ENCODE measurements at regions of chr1 and their contacts with region 1.

Region 1: DNA sequence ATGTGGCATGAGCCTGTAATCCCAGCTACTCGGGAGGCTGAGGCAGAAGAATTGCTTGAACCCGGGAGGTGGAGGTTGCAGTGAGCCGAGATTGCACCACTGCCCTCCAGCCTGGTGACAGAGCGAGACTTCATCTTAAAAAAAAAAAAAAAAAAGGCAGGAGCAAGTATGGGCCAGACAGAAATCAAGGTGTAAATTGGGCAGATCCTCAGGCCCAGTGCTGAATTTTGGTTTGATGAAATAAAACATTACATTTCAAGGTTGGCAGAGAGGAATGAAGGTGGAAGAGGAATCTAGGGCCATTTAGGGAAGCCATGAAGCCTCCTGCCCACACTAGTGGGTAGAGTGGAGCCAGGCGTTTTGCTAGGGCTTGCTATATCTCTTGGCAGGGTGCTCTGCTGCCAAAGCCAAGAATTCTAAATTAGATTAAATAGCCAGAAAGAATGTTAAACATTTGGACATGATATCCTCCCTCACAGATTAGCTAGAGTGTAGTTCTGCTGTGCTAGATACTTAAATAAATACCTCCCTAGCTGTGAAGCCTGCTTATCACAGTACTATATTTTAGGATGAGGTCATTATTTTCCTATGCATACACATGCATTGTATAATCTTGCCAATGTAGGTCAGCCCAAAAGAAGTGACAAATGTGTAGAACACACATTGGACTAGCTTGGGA is 16.6 kb upstream of the LGALS8 start:
- DNase-seq: no peak
- H3K4me3 Mint-ChIP-seq: no peak overlapping the region
- H3K27ac Mint-ChIP-seq: no peak overlapping the region
- H3K4me1 Mint-ChIP-seq: peaks cover 37% of the 10 kb centered on the region
- H3K27me3 Mint-ChIP-seq: no peaks in the 10 kb centered on the region

Region 2: DNA sequence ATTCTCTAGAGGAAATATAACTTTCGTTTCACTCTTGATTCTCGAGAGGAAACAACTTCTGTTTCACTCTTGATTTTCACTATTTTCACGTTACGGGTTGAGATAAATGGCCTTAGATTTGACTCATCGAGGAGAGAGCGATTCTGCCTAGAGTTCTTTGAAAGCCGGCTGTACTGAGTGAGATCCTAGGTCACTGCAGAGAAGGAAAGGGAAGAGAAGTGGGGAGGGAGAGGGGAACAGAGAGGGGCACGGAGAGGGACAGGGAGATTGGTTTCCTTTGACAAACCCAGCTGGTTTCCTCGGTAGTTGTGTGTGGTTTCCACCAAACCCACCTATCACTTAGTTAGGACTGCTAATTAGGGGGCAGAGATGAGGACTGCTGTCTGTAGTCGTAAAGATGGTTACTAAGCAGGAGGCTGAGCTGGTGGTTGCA is 386.4 kb before region 1 on chr1:
- CTCF ChIA-PET with region 1: no interaction called
- POLR2A ChIA-PET with region 1: no interaction called
- intact Hi-C with region 1: loop called (anchors 1 kb)
- DNase-seq: no peak
- H3K4me3 Mint-ChIP-seq: no peak overlapping the region
- H3K27ac Mint-ChIP-seq: no peak overlapping the region
- H3K4me1 Mint-ChIP-seq: peaks cover 26% of the 10 kb centered on the region
- H3K27me3 Mint-ChIP-seq: peaks cover 7% of the 10 kb centered on the region

Region 3: GRCh38 chr1:236489710-236490377 is 17.3 kb before region 1 on chr1:
- CTCF ChIA-PET with region 1: interaction called, 5 read pairs
- POLR2A ChIA-PET with region 1: no interaction called
- intact Hi-C with region 1: loop called (anchors 2 kb)
- DNase-seq: no peak
- H3K4me3 Mint-ChIP-seq: no peak overlapping the region
- H3K27ac Mint-ChIP-seq: no peak overlapping the region
- H3K4me1 Mint-ChIP-seq: peaks cover 22% of the 10 kb centered on the region
- H3K27me3 Mint-ChIP-seq: peaks cover 7% of the 10 kb centered on the region

Region 4: DNA sequence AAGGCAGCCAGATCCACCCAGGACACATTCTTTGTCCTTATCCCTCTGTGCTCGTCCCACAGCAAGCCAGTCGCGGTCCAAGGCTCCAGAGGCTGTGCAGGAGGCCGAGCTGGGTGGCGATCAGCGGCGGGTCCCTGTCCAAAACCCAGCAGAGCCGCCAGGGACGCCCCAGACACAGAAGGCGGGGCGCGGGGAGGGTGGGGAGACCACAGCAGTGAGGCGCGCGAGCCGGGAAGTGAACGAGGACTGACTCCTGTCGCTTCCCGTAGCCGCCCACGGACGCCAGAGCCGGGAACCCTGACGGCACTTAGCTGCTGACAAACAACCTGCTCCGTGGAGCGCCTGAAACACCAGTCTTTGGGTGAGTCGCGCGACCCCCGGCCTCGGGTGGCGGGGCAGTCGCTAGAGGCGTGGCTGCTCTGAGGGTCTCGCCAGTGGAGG is 16.6 kb after region 1 on chr1 and contains the start of gene LGALS8:
- CTCF ChIA-PET with region 1: no interaction called
- POLR2A ChIA-PET with region 1: interaction called, 6 read pairs
- intact Hi-C with region 1: loop called (anchors 1 kb)
- DNase-seq: peak; percentile 94
- H3K4me3 Mint-ChIP-seq: peak within 1 kb of the TSS; percentile 97
- H3K27ac Mint-ChIP-seq: peak within 1 kb of the TSS; percentile 98
- H3K4me1 Mint-ChIP-seq: peaks cover 23% of the 10 kb centered on the region
- H3K27me3 Mint-ChIP-seq: no peaks in the 10 kb centered on the region
- total RNA-seq, gene LGALS8: 83.7 to 88.3 TPM

Region 5: GRCh38 chr1:236534151-236534651 is 27.0 kb after region 1 on chr1:
- CTCF ChIA-PET with region 1: interaction called, 4 read pairs
- POLR2A ChIA-PET with region 1: no interaction called
- intact Hi-C with region 1: loop called (anchors 1 kb)
- DNase-seq: peak; percentile 71
- H3K4me3 Mint-ChIP-seq: peak overlapping the region; percentile 34
- H3K27ac Mint-ChIP-seq: peak overlapping the region; percentile 88
- H3K4me1 Mint-ChIP-seq: peaks cover 54% of the 10 kb centered on the region
- H3K27me3 Mint-ChIP-seq: no peaks in the 10 kb centered on the region

Region 6: GRCh38 chr1:236560213-236560786 is 53.1 kb after region 1 on chr1:
- CTCF ChIA-PET with region 1: no interaction called
- POLR2A ChIA-PET with region 1: no interaction called
- intact Hi-C with region 1: no loop called
- DNase-seq: no peak
- H3K4me3 Mint-ChIP-seq: no peak overlapping the region
- H3K27ac Mint-ChIP-seq: no peak overlapping the region
- H3K4me1 Mint-ChIP-seq: peaks cover 2% of the 10 kb centered on the region
- H3K27me3 Mint-ChIP-seq: no peaks in the 10 kb centered on the region

Measured in activated CD4-positive, alpha-beta memory T cell treated with anti-CD3 and anti-CD28 coated beads for 36 hours (primary cell).